Endothelial cell of umbilical vein (primary cell): ENCODE measurements at regions of chrX and their contacts with region 1.

Region 1: DNA sequence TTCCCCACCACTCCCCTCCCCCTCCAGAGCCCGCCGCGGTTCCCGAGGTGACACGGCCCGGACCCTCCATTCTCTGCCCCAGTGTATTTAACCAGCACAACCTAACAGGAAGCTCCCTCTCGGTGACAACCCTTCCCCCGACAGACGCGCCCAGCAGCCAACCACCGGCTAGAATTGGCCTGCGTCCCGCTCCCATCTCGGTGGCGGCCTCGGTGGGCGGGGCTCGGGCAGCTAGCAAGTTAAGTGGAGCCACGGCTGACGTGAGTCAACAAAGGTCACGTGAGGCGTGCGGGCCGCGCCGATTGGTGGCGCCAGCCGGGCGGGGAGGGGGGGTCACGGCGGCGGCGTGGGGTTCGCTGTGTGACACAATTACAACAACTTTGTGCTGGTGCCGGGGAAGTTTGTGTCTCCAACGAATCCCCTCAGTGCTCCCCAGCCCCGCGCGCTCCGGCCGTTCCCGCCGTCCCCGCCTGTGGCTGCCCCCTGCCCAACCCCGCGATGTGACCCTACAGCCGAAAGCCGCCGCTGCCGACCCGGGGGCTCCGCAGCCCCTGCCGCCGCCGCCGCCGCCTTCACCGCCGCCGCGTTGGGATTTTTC is at the start of gene KDM6A:
- DNase-seq: peak; percentile 96
- H3K4me3 ChIP-seq: peak within 1 kb of the TSS; percentile 75 to 96 (median 88)
- H3K27ac ChIP-seq: peak within 1 kb of the TSS; percentile 80
- H3K4me1 ChIP-seq: peaks cover 6% of the 10 kb centered on the region
- H3K27me3 ChIP-seq: no peaks in the 10 kb centered on the region
- CTCF ChIP-seq: no peak
- POLR2A ChIP-seq: no peak
- total RNA-seq, gene KDM6A: 16.1 and 20.6 TPM in 2 replicates

Region 2: DNA sequence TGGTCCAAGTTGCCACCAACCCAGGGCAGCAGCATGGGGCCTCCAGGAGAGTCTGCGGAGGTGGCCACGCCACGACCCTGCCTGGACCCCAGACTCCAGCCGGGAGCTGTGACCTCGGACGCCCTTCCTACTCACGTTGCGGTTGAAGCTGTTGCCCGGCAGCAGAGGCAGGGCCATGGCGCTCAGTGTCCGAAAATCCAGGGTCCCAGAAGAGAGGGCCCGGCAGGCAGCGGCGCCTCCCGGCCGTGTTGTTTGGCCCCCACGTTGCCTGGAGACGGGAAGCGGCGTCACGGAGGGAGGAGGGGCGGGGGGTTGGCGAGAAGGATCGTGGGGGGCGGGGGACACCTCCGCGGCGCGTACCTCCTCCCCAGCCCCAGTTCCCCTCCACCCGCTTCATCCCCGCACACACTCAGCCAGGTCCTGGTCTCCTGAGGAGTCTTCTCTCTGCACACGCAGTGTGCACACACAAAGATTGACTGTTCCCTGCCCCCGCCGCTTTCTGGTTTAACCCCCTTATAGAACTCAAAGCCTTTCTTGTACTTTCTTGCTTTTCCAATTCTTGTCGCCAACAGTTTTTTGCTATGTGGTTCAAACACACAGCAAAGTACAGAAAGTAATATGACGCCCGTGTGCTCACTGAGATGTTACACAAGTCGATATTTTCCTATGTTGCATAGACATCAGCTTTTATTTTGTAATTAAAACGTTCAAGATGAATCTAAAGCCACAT is 529.3 kb before region 1 on chrX and contains the start of gene EFHC2:
- CTCF ChIA-PET with region 1: no interaction called
- POLR2A ChIA-PET with region 1: no interaction called
- dilution Hi-C with region 1: no loop called
- intact Hi-C with region 1: no loop called
- DNase-seq: peak; percentile 1
- H3K4me3 ChIP-seq: peak within 1 kb of the TSS in 2 of 3 experiments; percentile 23 to 34
- H3K27ac ChIP-seq: no peak within 1 kb of the TSS
- H3K4me1 ChIP-seq: no peaks in the 10 kb centered on the region
- H3K27me3 ChIP-seq: no peaks in the 10 kb centered on the region
- CTCF ChIP-seq: no peak
- POLR2A ChIP-seq: no peak
- total RNA-seq, gene EFHC2: not detected in 2 replicates

Region 3: DNA sequence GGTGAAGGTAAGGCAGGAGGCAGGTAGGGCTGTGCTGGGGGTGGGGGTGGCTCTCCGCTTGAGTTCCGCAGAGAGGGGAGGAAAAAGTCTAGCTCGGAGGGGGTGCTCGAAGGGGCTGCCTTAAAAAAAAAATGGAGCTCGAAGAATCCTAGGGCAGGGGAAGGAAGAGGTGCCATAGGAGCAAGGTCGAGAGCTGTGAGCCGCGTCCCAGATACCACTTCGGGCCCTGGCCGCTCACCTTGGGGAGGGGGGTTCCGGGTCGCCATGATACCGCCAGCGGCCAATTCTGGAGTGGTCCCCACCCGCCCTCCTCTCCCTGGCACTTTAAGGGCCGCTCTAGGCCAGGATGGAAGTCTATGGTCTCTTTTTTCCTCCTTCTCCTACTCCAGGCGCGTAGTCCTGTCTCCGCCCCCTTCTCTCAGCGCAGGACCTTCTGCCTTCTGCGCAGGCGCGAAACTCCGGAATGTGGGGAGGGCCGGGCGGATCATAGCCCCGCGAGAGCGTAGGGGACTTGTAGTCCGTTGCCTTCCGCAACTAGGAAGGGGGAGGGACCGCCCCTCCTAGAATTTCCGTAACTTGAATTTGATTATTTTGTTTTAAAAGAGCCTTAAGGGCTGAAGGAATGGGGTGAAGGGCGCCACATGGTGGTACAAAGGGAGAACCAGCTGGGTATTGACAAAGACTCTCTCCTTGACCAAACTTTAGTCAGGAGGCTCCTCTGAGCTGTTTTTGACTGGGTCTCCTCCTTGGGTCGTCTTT is 330.2 kb before region 1 on chrX and contains the start of gene FUNDC1:
- CTCF ChIA-PET with region 1: no interaction called
- POLR2A ChIA-PET with region 1: no interaction called
- dilution Hi-C with region 1: no loop called
- intact Hi-C with region 1: loop called (anchors 2 kb)
- DNase-seq: peak; percentile 96
- H3K4me3 ChIP-seq: peak within 1 kb of the TSS; percentile 56 to 72 (median 65)
- H3K27ac ChIP-seq: peak within 1 kb of the TSS; percentile 76
- H3K4me1 ChIP-seq: peaks cover 12% of the 10 kb centered on the region
- H3K27me3 ChIP-seq: no peaks in the 10 kb centered on the region
- CTCF ChIP-seq: no peak
- POLR2A ChIP-seq: no peak
- total RNA-seq, gene FUNDC1: 9.7 and 15.4 TPM in 2 replicates

Region 4: DNA sequence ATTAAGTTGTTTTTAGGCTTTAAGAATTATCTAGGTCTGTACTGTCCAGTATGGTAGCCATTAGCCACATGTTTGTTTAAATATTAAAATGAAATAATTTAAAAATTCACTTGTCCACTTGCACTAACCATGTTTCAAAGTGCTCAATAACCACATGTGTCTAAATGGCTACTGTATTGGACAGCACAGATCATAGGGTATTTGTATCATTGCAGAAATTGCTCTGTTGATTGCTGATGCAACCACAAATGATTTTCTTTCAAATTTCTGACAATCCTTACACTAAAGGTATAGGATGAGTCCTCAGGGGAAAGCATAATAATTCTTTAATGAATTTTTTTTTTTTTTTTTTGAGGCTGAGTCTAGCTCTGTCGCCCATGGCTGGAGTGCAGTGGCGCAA is 84.9 kb after region 1 on chrX:
- CTCF ChIA-PET with region 1: no interaction called
- POLR2A ChIA-PET with region 1: interaction called, 12 read pairs
- dilution Hi-C with region 1: no loop called
- intact Hi-C with region 1: no loop called
- DNase-seq: no peak
- H3K4me3 ChIP-seq: no peak overlapping the region
- H3K27ac ChIP-seq: no peak overlapping the region
- H3K4me1 ChIP-seq: peaks cover 14% of the 10 kb centered on the region
- H3K27me3 ChIP-seq: no peaks in the 10 kb centered on the region
- CTCF ChIP-seq: no peak
- POLR2A ChIP-seq: no peak

Region 5: GRCh38 chrX:45186643-45187026 is 313.7 kb after region 1 on chrX:
- CTCF ChIA-PET with region 1: no interaction called
- POLR2A ChIA-PET with region 1: interaction called, 3 read pairs
- dilution Hi-C with region 1: no loop called
- intact Hi-C with region 1: loop called (anchors 5 kb)
- DNase-seq: no peak
- H3K4me3 ChIP-seq: peak overlapping the region in 1 of 3 experiments; percentile 46
- H3K27ac ChIP-seq: no peak overlapping the region
- H3K4me1 ChIP-seq: peaks cover 9% of the 10 kb centered on the region
- H3K27me3 ChIP-seq: no peaks in the 10 kb centered on the region
- CTCF ChIP-seq: no peak
- POLR2A ChIP-seq: no peak

Region 6: GRCh38 chrX:45196701-45197100 is 323.8 kb after region 1 on chrX:
- CTCF ChIA-PET with region 1: no interaction called
- POLR2A ChIA-PET with region 1: no interaction called
- dilution Hi-C with region 1: no loop called
- intact Hi-C with region 1: no loop called
- DNase-seq: peak; percentile 86
- H3K4me3 ChIP-seq: no peak overlapping the region
- H3K27ac ChIP-seq: peak overlapping the region; percentile 91
- H3K4me1 ChIP-seq: peaks cover 53% of the 10 kb centered on the region
- H3K27me3 ChIP-seq: no peaks in the 10 kb centered on the region
- CTCF ChIP-seq: no peak
- POLR2A ChIP-seq: no peak